ENCODE measurements at regions of chr2 and their contacts with region 1.

Region 1: DNA sequence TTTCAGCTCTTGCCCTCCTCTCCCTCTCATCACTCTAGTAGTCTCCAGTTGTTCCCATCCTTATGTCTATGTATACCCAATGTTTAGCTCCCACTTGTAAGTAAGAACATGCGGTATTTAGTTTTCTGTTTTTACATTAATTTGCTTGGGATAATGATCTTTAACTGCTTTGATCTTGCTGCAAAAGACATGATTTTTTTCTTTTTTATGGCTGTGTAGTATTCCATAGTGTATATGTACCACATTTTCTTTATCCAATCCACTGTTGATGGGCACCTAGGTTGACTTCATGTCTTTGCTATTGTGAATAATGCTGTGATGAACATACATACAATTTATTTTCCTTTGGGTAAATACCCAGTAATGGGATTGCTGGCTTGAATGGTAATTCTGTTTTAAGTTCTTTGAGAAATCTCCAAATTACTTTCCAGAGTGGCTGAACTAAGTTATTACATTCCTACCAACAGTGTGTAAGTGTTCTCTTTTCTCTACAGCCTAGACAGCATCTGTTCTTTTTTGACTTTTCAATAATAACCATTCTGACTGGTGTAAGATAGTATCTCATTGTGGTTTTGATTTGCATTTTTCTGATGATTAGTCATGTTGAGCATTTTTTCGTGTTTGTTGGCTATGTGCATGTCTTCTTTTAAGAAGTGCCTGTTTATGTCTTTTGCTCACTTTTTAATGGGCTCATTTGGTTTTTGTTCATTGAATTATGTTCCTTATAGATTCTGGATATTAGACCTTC is 179.6 kb upstream of the SLC39A10 start:
- DNase-seq: no peak
- H3K4me3 Mint-ChIP-seq: no peak overlapping the region
- H3K27ac Mint-ChIP-seq: peak overlapping the region; percentile 33
- H3K4me1 Mint-ChIP-seq: peaks cover 49% of the 10 kb centered on the region
- H3K27me3 Mint-ChIP-seq: no peaks in the 10 kb centered on the region

Region 2: DNA sequence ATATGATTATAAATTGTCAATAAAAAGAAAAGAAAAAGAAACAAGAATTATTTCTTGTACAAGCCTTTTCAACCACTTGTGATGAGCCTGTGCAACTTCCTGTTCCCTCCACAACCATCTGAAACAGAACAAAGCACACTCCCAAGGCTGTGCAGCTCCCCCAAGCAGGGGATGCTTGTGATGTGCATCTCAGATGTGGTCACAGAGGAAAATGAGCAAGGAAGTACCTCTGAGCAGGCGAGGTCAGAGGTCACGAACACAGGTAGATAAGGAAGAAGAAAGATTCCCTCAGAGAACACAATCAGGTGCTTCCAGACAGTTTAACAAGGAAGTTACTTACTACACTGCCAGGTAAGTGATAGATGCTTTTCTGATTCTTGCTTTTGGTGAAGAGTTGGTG is 95.2 kb before region 1 on chr2:
- intact Hi-C with region 1: no loop called
- DNase-seq: peak; percentile 12
- H3K4me3 Mint-ChIP-seq: no peak overlapping the region
- H3K27ac Mint-ChIP-seq: peak overlapping the region; percentile 75
- H3K4me1 Mint-ChIP-seq: peaks cover 12% of the 10 kb centered on the region
- H3K27me3 Mint-ChIP-seq: no peaks in the 10 kb centered on the region

Region 3: DNA sequence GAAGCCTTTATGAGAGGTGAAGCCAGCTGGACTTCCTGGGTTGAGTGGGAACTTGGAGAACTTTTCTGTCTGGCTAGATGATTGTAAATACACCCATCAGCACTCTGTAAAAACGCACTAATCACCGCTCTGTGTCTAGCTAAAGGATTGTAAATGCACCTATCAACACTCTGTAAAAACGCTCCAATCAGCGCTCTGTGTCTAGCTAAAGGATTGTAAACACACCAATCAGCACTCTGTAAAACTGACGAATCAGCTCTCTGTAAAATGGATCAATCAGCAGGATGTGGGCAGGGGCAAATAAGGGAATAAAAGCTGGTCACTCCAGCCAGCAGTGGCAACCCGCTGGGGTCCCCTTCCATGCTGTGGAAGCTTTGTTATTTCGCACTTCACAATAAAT is 16.0 kb after region 1 on chr2:
- intact Hi-C with region 1: loop called (anchors 2 kb)
- DNase-seq: no peak
- H3K4me3 Mint-ChIP-seq: no peak overlapping the region
- H3K27ac Mint-ChIP-seq: no peak overlapping the region
- H3K4me1 Mint-ChIP-seq: peaks cover 46% of the 10 kb centered on the region
- H3K27me3 Mint-ChIP-seq: no peaks in the 10 kb centered on the region